Activated CD4-positive, alpha-beta T cell treated with anti-CD3 and anti-CD28 coated beads, Interleukin-2, amount 10 ng/mL, durations not matched to agents 24 days and 14 days (primary cell): ENCODE measurements at regions of chr22 and their contacts with region 1.

Region 1: GRCh38 chr22:25060522-25061071 is 108.1 kb downstream of the KIAA1671 start:
- DNase-seq: peak; percentile 78
- H3K4me3 Mint-ChIP-seq: peak overlapping the region; percentile 64
- H3K27ac Mint-ChIP-seq: peak overlapping the region; percentile 86
- H3K4me1 Mint-ChIP-seq: peaks cover 52% of the 10 kb centered on the region
- H3K27me3 Mint-ChIP-seq: no peaks in the 10 kb centered on the region

Region 2: DNA sequence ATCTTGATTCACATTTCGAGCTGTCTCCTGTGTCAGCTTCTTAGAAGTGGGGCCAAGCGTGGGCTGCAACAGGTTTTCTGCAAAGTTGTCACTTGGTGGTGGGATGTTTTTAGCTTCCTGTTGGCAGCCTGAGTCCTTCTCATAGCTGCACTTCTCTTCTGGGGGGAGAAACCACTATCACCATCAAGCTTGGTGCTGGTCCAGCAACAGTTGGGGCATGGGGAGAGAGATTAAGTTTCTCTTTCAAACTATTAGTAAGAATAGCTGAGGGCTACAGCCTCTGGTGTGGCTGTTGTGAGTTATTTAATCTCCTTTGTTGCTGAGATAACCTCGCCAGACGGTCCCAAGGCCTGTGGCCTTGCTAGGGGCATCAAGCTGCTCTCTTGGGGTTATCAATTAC is 15.7 kb after region 1 on chr22:
- intact Hi-C with region 1: loop called (anchors 2 kb)
- DNase-seq: peak; percentile 74
- H3K4me3 Mint-ChIP-seq: peak overlapping the region; percentile 56
- H3K27ac Mint-ChIP-seq: peak overlapping the region; percentile 79
- H3K4me1 Mint-ChIP-seq: peaks cover 76% of the 10 kb centered on the region
- H3K27me3 Mint-ChIP-seq: no peaks in the 10 kb centered on the region

Region 3: DNA sequence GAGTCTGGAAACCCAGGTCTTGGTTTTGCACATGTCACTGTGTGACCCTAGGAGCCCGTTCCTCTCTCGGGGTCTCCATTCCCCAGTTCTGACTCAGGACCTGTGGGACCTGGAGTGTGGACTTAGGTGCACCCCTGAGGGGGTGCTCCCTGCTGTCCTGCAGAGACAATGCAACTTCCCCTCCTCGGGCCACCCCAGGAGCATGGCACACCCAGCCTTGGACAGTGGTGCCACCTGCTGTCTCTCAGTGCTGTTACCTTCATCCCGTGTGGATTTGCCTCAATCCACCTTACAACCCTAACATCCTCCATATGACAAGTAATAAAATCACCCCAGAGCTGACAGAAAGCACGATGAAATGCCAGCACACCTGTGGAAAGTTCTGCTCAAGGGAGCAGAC is 111.6 kb after region 1 on chr22:
- intact Hi-C with region 1: loop called (anchors 5 kb)
- DNase-seq: peak; percentile 63
- H3K4me3 Mint-ChIP-seq: no peak overlapping the region
- H3K27ac Mint-ChIP-seq: no peak overlapping the region
- H3K4me1 Mint-ChIP-seq: no peaks in the 10 kb centered on the region
- H3K27me3 Mint-ChIP-seq: no peaks in the 10 kb centered on the region